Left cardiac atrium (tissue), 4 donors: ENCODE measurements at regions of chr14 and their contacts with region 1.

Region 1: GRCh38 chr14:105490572-105491366 is at the start of gene TEDC1:
- DNase-seq: peak; percentile 100
- ATAC-seq: peak; percentile 79
- total RNA-seq, gene TEDC1: 5.1 to 5.9 TPM

Region 2: GRCh38 chr14:104993808-104994591 is 496.8 kb before region 1 on chr14:
- intact Hi-C with region 1: no loop called
- DNase-seq: no peak
- ATAC-seq: no peak

Region 3: GRCh38 chr14:105369653-105370040 is 121.1 kb before region 1 on chr14:
- intact Hi-C with region 1: loop called in 1 of 2 experiments (anchors 1 kb)
- DNase-seq: no peak
- ATAC-seq: no peak

Region 4: DNA sequence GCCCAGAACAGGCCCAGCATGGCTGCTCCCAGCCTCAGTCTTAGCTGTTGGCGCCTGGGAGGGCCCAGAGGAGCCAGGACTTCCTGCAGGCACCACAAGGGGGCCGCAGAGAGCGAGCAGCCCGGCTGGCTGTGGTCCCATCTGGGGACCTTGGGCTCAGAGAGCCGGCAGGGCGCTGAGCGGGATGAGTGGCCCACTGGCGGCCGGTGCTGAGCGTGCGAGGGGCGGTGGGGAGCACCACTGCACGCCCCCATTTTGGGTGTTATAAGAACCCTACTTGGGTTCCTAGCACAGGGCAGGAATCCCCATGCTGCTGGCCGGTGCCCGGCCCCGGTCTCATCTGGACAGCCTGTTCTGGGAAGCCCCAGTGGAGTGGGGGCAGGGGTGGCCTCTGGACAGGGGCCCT is 42.1 kb before region 1 on chr14:
- intact Hi-C with region 1: loop called in 1 of 2 experiments (anchors 2 kb)
- DNase-seq: peak; percentile 81
- ATAC-seq: peak; percentile 86 to 90